PC-9 (cell line): ENCODE measurements at regions of chr1 and their contacts with region 1.

Region 1: DNA sequence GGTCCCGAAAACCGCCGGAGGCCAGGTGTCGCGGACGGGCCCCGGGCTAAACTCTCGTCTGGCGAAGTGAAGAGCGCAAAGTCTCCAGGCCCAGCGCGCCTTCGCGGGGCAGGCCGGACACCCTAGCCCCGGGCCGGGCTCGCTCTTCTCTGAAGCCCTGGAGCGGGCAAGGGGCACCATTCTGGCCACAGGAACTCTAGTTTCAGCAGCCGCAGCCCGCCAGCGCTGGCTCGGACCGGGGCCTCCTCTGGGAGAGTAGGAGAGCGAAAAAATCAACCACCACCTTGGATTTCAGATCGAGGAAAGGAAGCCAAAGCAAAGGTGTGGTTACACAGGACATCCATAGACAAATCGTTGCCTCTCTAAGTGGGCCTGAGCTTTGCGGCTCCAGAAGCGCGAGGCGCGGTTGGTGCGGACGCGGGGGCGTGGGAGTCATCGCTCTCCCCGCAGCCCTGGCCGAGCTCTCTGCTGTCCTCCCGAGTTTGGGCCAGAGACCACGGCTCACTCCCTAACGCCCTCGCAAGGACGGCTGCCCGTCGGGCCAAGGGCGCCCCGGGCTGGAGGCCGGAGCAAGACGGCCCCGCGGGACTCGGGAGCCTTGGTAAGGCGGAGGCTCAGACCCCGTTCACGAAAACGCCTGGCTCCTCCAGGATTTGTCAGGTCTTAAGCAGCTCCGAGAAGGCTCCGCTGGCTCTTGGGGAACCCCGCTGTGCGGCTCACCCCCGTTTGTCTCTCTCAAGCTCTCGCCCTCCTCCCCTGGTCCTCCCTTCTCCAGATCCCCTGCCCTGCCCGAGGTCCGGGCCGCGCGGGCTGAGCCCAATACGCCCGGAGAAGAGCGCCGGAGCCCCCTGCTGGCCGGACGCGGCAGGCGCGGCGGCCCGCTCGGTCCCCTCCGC is 132.9 kb upstream of the DPYD start:
- DNase-seq: peak in 1 of 2 experiments; percentile 82
- H3K4me3 ChIP-seq: peak overlapping the region; percentile 58
- H3K27ac ChIP-seq: no peak overlapping the region
- H3K4me1 ChIP-seq: no peaks in the 10 kb centered on the region
- H3K27me3 ChIP-seq: no peaks in the 10 kb centered on the region
- CTCF ChIP-seq: peak; percentile 94

Region 2: DNA sequence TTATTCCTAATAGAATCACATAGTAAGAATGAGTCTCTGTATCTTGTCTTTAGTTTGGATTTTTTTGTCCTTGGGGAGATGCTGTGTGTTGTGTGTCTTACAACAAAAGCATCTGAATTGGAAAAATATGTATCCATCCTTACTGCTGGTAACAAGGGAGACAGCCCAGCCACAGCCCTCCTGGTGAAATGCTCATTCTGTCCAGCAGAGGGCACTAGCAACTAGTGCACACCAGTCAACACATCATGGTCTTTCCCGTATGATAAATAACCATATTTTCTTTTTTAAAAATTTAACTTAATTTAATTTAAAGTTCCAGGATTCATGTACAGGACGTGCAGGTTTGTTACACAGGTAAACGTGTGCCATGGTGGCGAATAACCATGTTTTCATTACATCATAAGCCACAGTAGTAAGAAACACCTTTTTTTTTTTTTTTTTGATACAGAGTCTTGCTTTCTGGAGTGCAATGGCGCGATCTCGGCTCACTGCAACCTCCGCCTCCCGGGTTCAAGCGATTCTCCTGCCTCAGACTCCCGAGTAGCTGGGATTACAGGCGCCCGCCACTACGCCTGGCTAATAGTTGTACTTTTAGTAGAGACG is 1087.1 kb before region 1 on chr1:
- CTCF ChIA-PET with region 1: interaction called, 3 read pairs
- POLR2A ChIA-PET with region 1: no interaction called
- intact Hi-C with region 1: loop called (anchors 1 kb)
- DNase-seq: peak; percentile 57 to 74
- H3K4me3 ChIP-seq: peak overlapping the region; percentile 42; the same call in 1 of the 2 replicates
- H3K27ac ChIP-seq: no peak overlapping the region
- H3K4me1 ChIP-seq: 0 out of 2 replicates have a peak, but pooled peaks cover 3% of the 10 kb centered on the region
- H3K27me3 ChIP-seq: no peaks in the 10 kb centered on the region
- CTCF ChIP-seq: peak; percentile 99

Region 3: DNA sequence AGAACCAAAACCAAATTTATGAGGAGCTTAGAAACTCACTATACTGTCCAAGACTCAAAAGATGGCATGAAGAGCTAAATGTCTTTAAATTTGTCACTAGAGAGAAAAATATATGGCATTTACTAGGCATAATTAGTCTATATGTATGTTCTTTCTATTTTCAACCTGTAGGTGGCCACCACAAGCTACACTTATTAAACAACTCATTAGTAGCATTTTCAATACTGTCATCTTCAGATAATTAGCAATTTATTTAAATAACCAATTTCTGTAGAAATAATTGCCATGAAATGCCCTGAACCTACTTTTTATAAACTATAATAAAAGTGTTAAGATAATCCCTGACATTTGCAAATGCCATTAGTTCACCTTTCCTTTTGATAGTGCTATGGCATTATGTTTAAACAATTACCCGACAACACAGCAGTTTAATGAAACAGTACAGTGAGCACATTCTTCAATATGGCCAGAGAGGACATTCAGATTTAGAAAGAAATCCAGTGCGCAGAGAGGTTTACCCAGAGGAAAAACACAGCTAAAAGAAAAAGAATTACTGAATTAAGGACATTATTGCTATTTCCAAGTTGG is 809.7 kb before region 1 on chr1:
- CTCF ChIA-PET with region 1: no interaction called
- POLR2A ChIA-PET with region 1: no interaction called
- intact Hi-C with region 1: loop called (anchors 10 kb)
- DNase-seq: no peak
- H3K4me3 ChIP-seq: no peak overlapping the region
- H3K27ac ChIP-seq: no peak overlapping the region
- H3K4me1 ChIP-seq: no peaks in the 10 kb centered on the region
- H3K27me3 ChIP-seq: no peaks in the 10 kb centered on the region
- CTCF ChIP-seq: peak; percentile 86

Region 4: DNA sequence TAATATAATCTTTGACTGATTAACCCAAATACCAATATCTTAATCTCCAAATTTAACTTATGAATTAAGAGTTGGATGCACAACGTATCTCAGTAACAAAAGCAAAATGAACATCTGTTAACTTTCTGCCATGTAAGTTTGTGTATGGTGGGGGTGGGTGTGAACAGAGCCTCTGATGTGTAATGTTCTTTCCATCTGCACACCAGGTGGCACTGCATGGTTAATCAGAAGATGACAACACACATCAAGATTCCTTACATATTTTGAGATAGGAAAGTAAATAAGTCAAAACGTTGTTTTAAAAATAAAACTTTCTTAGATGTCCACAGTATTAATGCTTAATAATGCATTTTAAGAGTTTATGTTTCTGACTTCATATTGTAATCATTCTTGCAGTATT is 384.8 kb before region 1 on chr1:
- CTCF ChIA-PET with region 1: no interaction called
- POLR2A ChIA-PET with region 1: no interaction called
- intact Hi-C with region 1: loop called (anchors 5 kb)
- DNase-seq: no peak
- H3K4me3 ChIP-seq: no peak overlapping the region
- H3K27ac ChIP-seq: no peak overlapping the region
- H3K4me1 ChIP-seq: no peaks in the 10 kb centered on the region
- H3K27me3 ChIP-seq: no peaks in the 10 kb centered on the region
- CTCF ChIP-seq: peak; percentile 58

Region 5: GRCh38 chr1:97906567-97907241 is 147.0 kb before region 1 on chr1:
- CTCF ChIA-PET with region 1: no interaction called
- POLR2A ChIA-PET with region 1: no interaction called
- intact Hi-C with region 1: no loop called
- DNase-seq: peak; percentile 48 to 52
- H3K4me3 ChIP-seq: no peak overlapping the region
- H3K27ac ChIP-seq: no peak overlapping the region
- H3K4me1 ChIP-seq: peaks cover 17% of the 10 kb centered on the region
- H3K27me3 ChIP-seq: no peaks in the 10 kb centered on the region
- CTCF ChIP-seq: no peak

Region 6: GRCh38 chr1:98210064-98210463 is 156.3 kb after region 1 on chr1:
- CTCF ChIA-PET with region 1: no interaction called
- POLR2A ChIA-PET with region 1: interaction called, 6 read pairs
- intact Hi-C with region 1: loop called (anchors 10 kb)
- DNase-seq: peak; percentile 18 to 64
- H3K4me3 ChIP-seq: no peak overlapping the region
- H3K27ac ChIP-seq: no peak overlapping the region
- H3K4me1 ChIP-seq: no peaks in the 10 kb centered on the region; the same call in 1 of the 2 replicates
- H3K27me3 ChIP-seq: no peaks in the 10 kb centered on the region
- CTCF ChIP-seq: no peak

Region 7: GRCh38 chr1:98468111-98468717 is 414.5 kb after region 1 on chr1:
- CTCF ChIA-PET with region 1: interaction called, 4 read pairs
- POLR2A ChIA-PET with region 1: interaction called, 3 read pairs
- intact Hi-C with region 1: loop called (anchors 1 kb)
- DNase-seq: peak; percentile 4 to 59
- H3K4me3 ChIP-seq: no peak overlapping the region
- H3K27ac ChIP-seq: no peak overlapping the region
- H3K4me1 ChIP-seq: no peaks in the 10 kb centered on the region
- H3K27me3 ChIP-seq: no peaks in the 10 kb centered on the region
- CTCF ChIP-seq: peak; percentile 98